Prostate gland (tissue), 2 donors: ENCODE measurements at regions of chr12 and their contacts with region 1.

Region 1: GRCh38 chr12:26651566-26652188 is 181.3 kb downstream of the ITPR2 start:
- DNase-seq: peak; percentile 50
- H3K4me3 ChIP-seq: no peak overlapping the region
- H3K27ac ChIP-seq: no peak overlapping the region
- H3K4me1 ChIP-seq: no peaks in the 10 kb centered on the region
- H3K27me3 ChIP-seq: no peaks in the 10 kb centered on the region
- CTCF ChIP-seq: peak; percentile 55 to 82 (median 74)
- POLR2A ChIP-seq: no peak

Region 2: DNA sequence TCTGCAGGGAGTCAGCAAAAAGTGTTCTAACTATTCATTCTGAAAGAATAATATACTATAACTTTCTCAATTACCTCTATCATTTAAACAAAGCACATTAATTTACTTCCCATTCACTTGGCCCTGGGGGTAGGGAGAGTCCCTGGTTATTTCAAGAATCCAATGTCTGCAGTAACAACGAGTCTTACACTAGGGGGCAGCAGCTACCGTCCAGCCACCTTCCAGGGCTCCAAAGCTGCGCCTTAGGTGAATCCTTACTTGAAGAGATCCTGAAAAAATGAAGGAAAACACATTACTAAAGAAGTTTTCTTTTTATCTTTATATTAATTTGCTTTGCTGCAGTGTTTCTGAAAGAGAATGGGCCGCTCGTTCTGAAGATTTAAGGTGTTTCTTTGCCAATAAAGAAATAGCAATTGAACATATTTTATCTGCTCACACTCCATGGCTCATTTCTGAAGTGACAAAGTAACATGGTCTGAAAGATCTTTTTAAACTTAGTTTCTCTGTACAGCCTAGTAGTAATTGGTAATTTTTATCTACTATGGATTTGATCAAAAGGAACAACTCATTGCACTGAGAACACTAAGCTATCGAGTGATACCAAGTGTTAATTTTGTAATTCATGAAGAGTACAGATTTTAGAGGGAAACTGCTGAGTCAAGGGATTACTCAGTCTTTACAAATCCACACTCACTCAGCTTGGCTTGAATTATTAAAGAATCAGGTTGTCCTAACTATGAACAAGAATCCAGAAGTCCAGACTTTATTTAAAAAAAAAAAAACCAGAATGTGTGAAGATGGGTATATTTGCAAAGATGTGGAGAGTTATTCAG is 554.4 kb before region 1 on chr12:
- intact Hi-C with region 1: loop called (anchors 5 kb)
- DNase-seq: peak; percentile 67
- H3K4me3 ChIP-seq: no peak overlapping the region
- H3K27ac ChIP-seq: no peak overlapping the region
- H3K4me1 ChIP-seq: peaks cover 7% of the 10 kb centered on the region
- H3K27me3 ChIP-seq: no peaks in the 10 kb centered on the region
- CTCF ChIP-seq: peak; percentile 65 to 92 (median 85)
- POLR2A ChIP-seq: no peak

Region 3: DNA sequence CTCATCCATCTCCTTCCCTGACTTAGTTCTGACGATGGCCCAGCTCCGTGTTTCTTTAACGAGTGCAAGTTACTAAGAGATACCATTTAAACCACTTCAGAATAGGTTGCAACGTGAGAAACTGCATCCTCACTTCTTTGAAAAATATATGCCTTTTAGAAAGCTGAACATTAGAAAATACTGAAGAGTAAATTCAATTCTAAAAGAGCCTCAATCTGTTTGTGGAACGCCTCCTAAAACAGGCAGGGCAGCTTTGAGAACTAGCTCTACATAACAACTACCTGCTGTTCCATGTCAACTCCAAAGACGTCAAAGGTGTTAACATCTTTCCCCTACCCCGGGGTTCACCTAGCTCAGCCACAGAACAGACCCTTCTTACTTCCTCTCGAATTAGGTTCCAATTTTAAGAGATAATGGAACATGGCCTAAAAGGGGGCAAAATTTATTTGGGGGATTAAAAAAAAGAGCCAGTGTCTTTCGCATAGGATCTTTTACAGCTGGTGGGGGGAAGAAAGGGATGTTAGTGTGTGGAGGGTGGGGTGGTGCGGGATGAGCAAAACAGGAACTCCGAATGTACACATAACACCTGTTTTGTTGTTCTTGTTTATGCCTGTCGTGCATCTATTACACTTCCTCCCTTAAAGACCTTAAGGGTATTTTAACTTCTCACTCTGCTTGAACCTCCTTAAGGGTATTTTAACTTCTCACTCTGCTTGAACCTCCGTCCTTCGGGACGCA is 530.2 kb before region 1 on chr12:
- intact Hi-C with region 1: loop called (anchors 2 kb)
- DNase-seq: no peak
- H3K4me3 ChIP-seq: peak overlapping the region; percentile 52 to 60
- H3K27ac ChIP-seq: peak overlapping the region; percentile 92 to 93
- H3K4me1 ChIP-seq: no peaks in the 10 kb centered on the region
- H3K27me3 ChIP-seq: no peaks in the 10 kb centered on the region
- CTCF ChIP-seq: no peak
- POLR2A ChIP-seq: no peak